GM12878 (cell line): ENCODE measurements at regions of chr9 and their contacts with region 1.

Region 1: GRCh38 chr9:129460323-129461261 is 160.3 kb downstream of the C9orf50 start:
- DNase-seq: peak; percentile 59
- ATAC-seq: peak; percentile 91
- H3K4me3 ChIP-seq: peak overlapping the region; percentile 61
- H3K27ac ChIP-seq: peak overlapping the region; percentile 42; the same call in 1 of the 2 replicates
- H3K4me1 ChIP-seq: peaks cover 26% of the 10 kb centered on the region
- H3K27me3 ChIP-seq: no peaks in the 10 kb centered on the region
- CTCF ChIP-seq: peak in 2 of 3 experiments; percentile 5 to 23; a peak in 1 of 6 replicates
- EP300 ChIP-seq: peak; percentile 18 to 61; a peak in 1 of 4 replicates
- POLR2A ChIP-seq: peak; percentile 69
- RAD21 ChIP-seq: no peak

Region 2: GRCh38 chr9:129383561-129384416 is 76.8 kb before region 1 on chr9:
- CTCF ChIA-PET with region 1: interaction called, 11 read pairs
- POLR2A ChIA-PET with region 1: no interaction called
- RAD21 ChIA-PET with region 1: interaction called, 8 read pairs
- SMC1A ChIA-PET with region 1: interaction called, 9 read pairs
- in situ Hi-C with region 1: no loop called
- intact Hi-C with region 1: no loop called
- DNase-seq: peak; percentile 38
- ATAC-seq: peak; percentile 96
- H3K4me3 ChIP-seq: peak overlapping the region; percentile 66
- H3K27ac ChIP-seq: peak overlapping the region; percentile 50
- H3K4me1 ChIP-seq: peaks cover 24% of the 10 kb centered on the region
- H3K27me3 ChIP-seq: no peaks in the 10 kb centered on the region; a peak in 2 of 4 replicates
- CTCF ChIP-seq: peak in 1 of 3 experiments; percentile 44; a peak in 2 of 6 replicates
- EP300 ChIP-seq: no peak
- POLR2A ChIP-seq: peak; percentile 62
- RAD21 ChIP-seq: peak; percentile 24; the same call in 1 of the 2 replicates

Region 3: GRCh38 chr9:129495534-129496325 is 35.1 kb after region 1 on chr9:
- CTCF ChIA-PET with region 1: interaction called, 3 read pairs
- POLR2A ChIA-PET with region 1: interaction called, 4 read pairs
- RAD21 ChIA-PET with region 1: interaction called, 19 read pairs
- SMC1A ChIA-PET with region 1: interaction called, 5 read pairs
- in situ Hi-C with region 1: no loop called
- intact Hi-C with region 1: no loop called
- DNase-seq: no peak
- ATAC-seq: peak; percentile 80
- H3K4me3 ChIP-seq: peak overlapping the region; percentile 41; the same call in 1 of the 2 replicates
- H3K27ac ChIP-seq: no peak overlapping the region
- H3K4me1 ChIP-seq: peaks cover 9% of the 10 kb centered on the region
- H3K27me3 ChIP-seq: peaks cover 4 to 9% of the 10 kb centered on the region in 2 experiments
- CTCF ChIP-seq: no peak
- EP300 ChIP-seq: no peak
- POLR2A ChIP-seq: no peak
- RAD21 ChIP-seq: no peak

Region 4: DNA sequence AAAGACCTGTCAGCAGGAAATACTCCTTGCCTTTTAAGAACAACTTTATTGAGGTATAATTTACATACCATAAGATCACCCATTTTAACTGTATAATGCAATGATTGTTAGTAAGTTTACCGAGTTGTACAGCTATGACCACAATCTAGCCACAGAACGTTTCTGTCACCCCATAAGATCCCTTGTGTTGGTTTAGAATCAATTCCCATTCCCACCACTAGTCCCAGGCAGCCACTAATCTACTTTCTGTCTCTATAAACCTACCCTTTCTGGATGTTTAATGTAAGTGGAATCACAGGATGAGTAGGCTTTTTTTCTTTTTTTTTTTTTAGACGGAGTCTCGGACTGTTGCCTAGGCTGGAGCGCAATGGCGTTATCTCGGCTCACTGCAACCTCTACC is 597.6 kb after region 1 on chr9:
- CTCF ChIA-PET with region 1: no interaction called
- POLR2A ChIA-PET with region 1: no interaction called
- RAD21 ChIA-PET with region 1: no interaction called
- SMC1A ChIA-PET with region 1: no interaction called
- in situ Hi-C with region 1: no loop called
- intact Hi-C with region 1: no loop called
- DNase-seq: no peak
- ATAC-seq: peak; percentile 9; the same call in 2 of the 3 replicates
- H3K4me3 ChIP-seq: no peak overlapping the region
- H3K27ac ChIP-seq: no peak overlapping the region
- H3K4me1 ChIP-seq: peaks cover 11% of the 10 kb centered on the region
- H3K27me3 ChIP-seq: no peaks in the 10 kb centered on the region
- CTCF ChIP-seq: peak in 2 of 3 experiments; percentile 18 to 19; a peak in 1 of 6 replicates
- EP300 ChIP-seq: no peak
- POLR2A ChIP-seq: no peak
- RAD21 ChIP-seq: no peak